ENCODE measurements at regions of chr16 and their contacts with region 1.

Region 1: DNA sequence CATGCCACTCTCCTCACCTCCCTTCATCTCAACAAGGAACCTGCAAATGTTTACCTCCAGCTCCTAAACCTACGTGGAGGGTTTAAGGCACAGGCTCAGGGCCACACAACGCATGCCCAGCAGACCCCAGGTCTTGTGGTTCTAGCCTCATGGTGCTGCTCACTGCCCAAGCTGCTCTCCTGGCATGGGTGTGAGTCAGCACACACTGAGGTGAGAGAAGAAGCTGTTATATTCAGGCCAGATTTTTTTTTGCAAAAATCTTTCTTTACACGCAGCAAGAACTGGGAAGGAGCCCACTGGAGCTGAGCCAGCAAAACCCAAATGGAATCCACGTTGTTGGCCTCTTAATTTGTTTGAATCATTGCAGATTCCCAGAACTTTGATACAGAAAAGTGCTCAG is 5.5 kb upstream of the C16orf96 start:
- DNase-seq: no peak
- H3K4me3 ChIP-seq: no peak overlapping the region
- H3K27ac ChIP-seq: no peak overlapping the region
- H3K4me1 ChIP-seq: no peaks in the 10 kb centered on the region
- H3K27me3 ChIP-seq: peaks cover 13% of the 10 kb centered on the region; the same call in 1 of the 2 replicates
- CTCF ChIP-seq: no peak

Region 2: GRCh38 chr16:3780570-3780969 is 770.0 kb before region 1 on chr16:
- CTCF ChIA-PET with region 1: no interaction called
- POLR2A ChIA-PET with region 1: interaction called, 12 read pairs
- intact Hi-C with region 1: no loop called
- DNase-seq: no peak
- H3K4me3 ChIP-seq: no peak overlapping the region
- H3K27ac ChIP-seq: no peak overlapping the region
- H3K4me1 ChIP-seq: no peaks in the 10 kb centered on the region
- H3K27me3 ChIP-seq: no peaks in the 10 kb centered on the region
- CTCF ChIP-seq: no peak

Region 3: GRCh38 chr16:3904875-3905274 is 645.7 kb before region 1 on chr16:
- CTCF ChIA-PET with region 1: interaction called, 11 read pairs
- POLR2A ChIA-PET with region 1: no interaction called
- intact Hi-C with region 1: no loop called
- DNase-seq: peak; percentile 41 to 44
- H3K4me3 ChIP-seq: no peak overlapping the region
- H3K27ac ChIP-seq: no peak overlapping the region
- H3K4me1 ChIP-seq: no peaks in the 10 kb centered on the region
- H3K27me3 ChIP-seq: no peaks in the 10 kb centered on the region
- CTCF ChIP-seq: no peak

Region 4: DNA sequence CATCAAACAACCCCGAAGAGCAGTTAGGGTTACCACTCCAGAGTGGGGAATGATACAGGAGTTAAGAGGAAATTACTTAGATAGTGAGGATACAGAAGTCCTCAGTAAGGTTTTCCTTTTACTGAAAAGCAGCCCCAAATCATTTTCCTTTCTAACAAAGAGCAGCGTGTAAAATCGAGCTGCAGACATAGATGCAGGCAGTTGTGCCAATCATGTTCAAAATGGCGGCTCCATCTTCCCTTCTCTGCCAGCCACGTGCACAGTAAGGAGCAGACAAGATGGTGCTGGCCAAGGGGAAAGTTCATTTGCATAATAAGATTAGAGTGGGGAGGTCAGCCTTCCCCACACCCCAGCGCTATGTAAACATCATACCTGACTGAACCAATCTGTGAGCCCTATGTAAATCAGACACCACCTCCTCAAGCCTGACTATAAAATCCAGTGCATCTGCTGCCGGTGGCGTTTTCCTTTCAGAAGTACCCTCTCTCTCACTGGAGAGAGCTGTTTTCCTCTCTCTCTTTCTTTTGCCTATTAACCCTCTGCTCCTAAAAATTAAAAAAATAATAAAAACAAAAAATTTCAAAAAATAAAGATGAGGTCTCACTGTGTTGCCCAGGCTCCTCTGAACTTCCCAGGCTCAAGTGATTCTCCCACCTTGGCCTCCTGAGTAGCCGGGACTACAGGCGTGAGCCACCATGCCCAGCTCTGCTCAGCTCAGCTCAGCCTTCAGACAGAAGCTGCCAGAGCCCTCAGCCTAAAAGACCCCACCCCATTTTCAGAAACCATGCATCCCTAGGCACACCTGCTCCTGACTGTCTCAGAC is 306.1 kb before region 1 on chr16:
- CTCF ChIA-PET with region 1: no interaction called
- POLR2A ChIA-PET with region 1: no interaction called
- intact Hi-C with region 1: no loop called
- DNase-seq: peak in 1 of 2 experiments; percentile 34
- H3K4me3 ChIP-seq: no peak overlapping the region
- H3K27ac ChIP-seq: no peak overlapping the region
- H3K4me1 ChIP-seq: no peaks in the 10 kb centered on the region
- H3K27me3 ChIP-seq: no peaks in the 10 kb centered on the region
- CTCF ChIP-seq: no peak

Region 5: GRCh38 chr16:4538350-4539235 is 12.0 kb before region 1 on chr16 and contains the start of gene CDIP1:
- CTCF ChIA-PET with region 1: interaction called, 11 read pairs
- POLR2A ChIA-PET with region 1: interaction called, 4 read pairs
- intact Hi-C with region 1: no loop called
- DNase-seq: peak; percentile 85 to 92
- H3K4me3 ChIP-seq: peak within 1 kb of the TSS; percentile 76
- H3K27ac ChIP-seq: no peak within 1 kb of the TSS
- H3K4me1 ChIP-seq: no peaks in the 10 kb centered on the region
- H3K27me3 ChIP-seq: no peaks in the 10 kb centered on the region
- CTCF ChIP-seq: no peak
- total RNA-seq, gene CDIP1: 10.7 and 18.4 TPM in 2 replicates

Region 6: DNA sequence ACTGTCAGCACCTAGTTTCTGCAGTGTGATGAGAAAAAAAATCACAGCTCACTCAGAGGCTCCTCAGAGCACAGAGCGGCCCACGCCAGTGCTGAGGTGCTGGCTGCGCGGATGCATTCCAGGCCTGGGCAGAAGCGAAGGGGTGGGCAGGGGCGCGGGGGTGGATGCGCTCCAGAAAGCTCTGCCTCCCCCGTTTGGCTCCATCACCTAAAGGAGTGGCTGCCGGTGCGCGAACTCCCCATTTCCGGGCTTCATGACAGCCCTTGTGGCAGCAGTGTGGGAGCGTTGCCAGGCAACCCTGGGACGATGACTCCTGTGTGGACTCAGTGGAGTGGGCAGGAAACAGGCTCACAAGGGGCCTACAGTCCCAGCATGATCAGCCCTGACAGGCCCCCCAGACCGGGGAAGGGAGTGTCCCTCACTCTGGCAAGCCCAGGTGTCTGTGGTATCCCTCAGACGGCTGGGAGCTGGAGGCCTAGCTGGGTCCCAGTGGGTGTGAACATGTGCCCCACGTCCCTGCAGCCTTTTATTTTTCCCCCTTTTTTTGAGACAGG is 109.9 kb after region 1 on chr16:
- CTCF ChIA-PET with region 1: no interaction called
- POLR2A ChIA-PET with region 1: no interaction called
- intact Hi-C with region 1: no loop called
- DNase-seq: no peak
- H3K4me3 ChIP-seq: no peak overlapping the region
- H3K27ac ChIP-seq: no peak overlapping the region
- H3K4me1 ChIP-seq: no peaks in the 10 kb centered on the region
- H3K27me3 ChIP-seq: no peaks in the 10 kb centered on the region
- CTCF ChIP-seq: no peak

Measured in PC-9 (cell line).